ENCODE measurements at regions of chr20 and their contacts with region 1.

Region 1: DNA sequence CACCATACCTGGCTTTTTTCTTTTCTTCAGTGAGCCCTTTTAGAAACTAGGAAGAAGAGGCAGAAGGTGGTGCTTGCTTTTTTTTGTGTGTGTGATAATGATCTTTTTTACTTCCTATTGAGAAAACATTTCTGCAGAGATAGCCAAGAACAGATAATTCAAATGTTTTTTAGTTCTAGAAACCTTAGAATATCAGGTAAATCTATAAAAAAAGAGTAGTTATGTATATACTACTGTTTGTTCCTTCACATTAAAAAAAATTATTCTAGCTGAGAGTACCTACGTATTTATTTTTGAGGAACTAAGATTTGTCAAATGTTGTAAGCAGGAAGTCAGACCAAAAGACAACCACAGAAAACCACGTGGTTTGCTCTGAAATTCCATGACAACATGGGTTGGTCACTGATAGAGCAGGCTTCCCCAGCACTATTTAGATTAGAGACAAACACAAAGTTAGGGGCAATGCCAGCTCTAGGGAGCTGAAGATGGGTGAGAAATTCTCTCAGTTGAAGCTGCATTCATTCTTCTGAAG is 12.8 kb downstream of the STK4 start:
- DNase-seq: peak; percentile 85
- H3K4me3 Mint-ChIP-seq: peak overlapping the region; percentile 64
- H3K27ac Mint-ChIP-seq: peak overlapping the region; percentile 93
- H3K4me1 Mint-ChIP-seq: peaks cover 75% of the 10 kb centered on the region
- H3K27me3 Mint-ChIP-seq: no peaks in the 10 kb centered on the region

Region 2: GRCh38 chr20:44966030-44966961 is 12.9 kb before region 1 on chr20 and contains the start of gene STK4:
- CTCF ChIA-PET with region 1: interaction called, 13 read pairs
- POLR2A ChIA-PET with region 1: interaction called, 3 read pairs
- DNase-seq: peak; percentile 95
- H3K4me3 Mint-ChIP-seq: peak within 1 kb of the TSS; percentile 94
- H3K27ac Mint-ChIP-seq: peak within 1 kb of the TSS; percentile 96
- H3K4me1 Mint-ChIP-seq: peaks cover 62% of the 10 kb centered on the region
- H3K27me3 Mint-ChIP-seq: no peaks in the 10 kb centered on the region
- total RNA-seq, gene STK4: 201 to 229 TPM

Region 3: GRCh38 chr20:45028424-45029136 is 49.4 kb after region 1 on chr20:
- CTCF ChIA-PET with region 1: no interaction called
- POLR2A ChIA-PET with region 1: no interaction called
- DNase-seq: no peak
- H3K4me3 Mint-ChIP-seq: no peak overlapping the region
- H3K27ac Mint-ChIP-seq: no peak overlapping the region
- H3K4me1 Mint-ChIP-seq: peaks cover 39% of the 10 kb centered on the region
- H3K27me3 Mint-ChIP-seq: no peaks in the 10 kb centered on the region

Region 4: GRCh38 chr20:45138561-45139300 is 159.6 kb after region 1 on chr20:
- CTCF ChIA-PET with region 1: no interaction called
- POLR2A ChIA-PET with region 1: no interaction called
- DNase-seq: peak; percentile 67
- H3K4me3 Mint-ChIP-seq: no peak overlapping the region
- H3K27ac Mint-ChIP-seq: no peak overlapping the region
- H3K4me1 Mint-ChIP-seq: no peaks in the 10 kb centered on the region
- H3K27me3 Mint-ChIP-seq: peaks cover 9% of the 10 kb centered on the region

Measured in activated CD4-positive, alpha-beta T cell treated with anti-CD3 and anti-CD28 coated beads, Interleukin-2, amount 10 ng/mL, durations not matched to agents 7 days and 5 days (primary cell).